OCI-LY7 (cell line): ENCODE measurements at regions of chr3 and their contacts with region 1.

Region 1: DNA sequence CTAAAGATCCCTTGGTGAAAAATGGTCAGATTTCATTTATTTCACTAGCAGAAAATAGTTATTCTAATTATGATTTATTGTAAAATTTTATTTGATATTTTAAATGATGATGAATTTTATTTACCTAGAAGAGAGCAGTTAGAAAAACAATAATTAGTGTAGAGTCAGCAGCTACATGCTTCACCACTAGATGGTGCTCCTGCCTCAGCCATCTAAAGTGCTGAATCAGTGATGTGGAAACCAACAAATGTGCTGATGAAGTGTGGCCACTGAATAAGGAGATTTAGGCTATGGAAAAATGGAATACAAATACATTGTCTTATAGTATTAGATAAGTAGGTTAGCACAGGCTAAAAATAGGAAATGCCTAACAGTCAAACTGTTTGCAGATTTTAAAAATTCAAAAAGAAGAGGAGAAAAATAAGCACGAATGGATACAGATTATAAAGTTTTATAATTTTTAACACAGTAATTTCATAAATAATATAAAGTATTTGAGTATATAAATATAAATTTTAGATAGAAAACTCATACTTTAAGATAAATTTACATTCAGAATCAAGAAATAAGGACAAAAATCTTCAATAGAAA is 109.8 kb downstream of the PPP2R3A start:
- DNase-seq: peak; percentile 76
- H3K4me3 ChIP-seq: no peak overlapping the region
- H3K27ac ChIP-seq: no peak overlapping the region
- H3K4me1 ChIP-seq: no peaks in the 10 kb centered on the region
- CTCF ChIP-seq: peak; percentile 99

Region 2: DNA sequence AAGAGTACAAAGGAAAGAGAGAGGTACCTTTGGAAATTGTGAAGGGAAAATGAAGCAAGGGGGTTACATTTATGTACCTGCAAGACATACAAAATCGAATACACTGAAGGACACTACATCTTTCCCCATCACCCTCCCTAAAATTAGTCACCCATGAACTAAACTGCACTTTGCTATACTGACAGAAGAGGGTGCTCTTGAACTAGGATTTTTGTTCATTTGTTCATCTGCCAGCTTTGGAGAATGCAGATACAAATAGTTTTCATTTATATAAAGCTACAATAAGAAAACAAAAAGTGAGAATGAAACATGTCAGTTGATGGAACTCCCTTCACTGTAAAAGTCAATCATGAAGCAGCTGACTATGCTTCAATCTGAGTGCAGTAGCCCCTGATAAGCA is 230.6 kb after region 1 on chr3:
- CTCF ChIA-PET with region 1: no interaction called
- POLR2A ChIA-PET with region 1: no interaction called
- intact Hi-C with region 1: loop called (anchors 1 kb)
- DNase-seq: peak; percentile 62
- H3K4me3 ChIP-seq: no peak overlapping the region
- H3K27ac ChIP-seq: no peak overlapping the region
- H3K4me1 ChIP-seq: no peaks in the 10 kb centered on the region
- CTCF ChIP-seq: peak; percentile 85

Region 3: GRCh38 chr3:136390574-136390973 is 315.3 kb after region 1 on chr3:
- CTCF ChIA-PET with region 1: no interaction called
- POLR2A ChIA-PET with region 1: no interaction called
- intact Hi-C with region 1: loop called (anchors 5 kb)
- DNase-seq: no peak
- H3K4me3 ChIP-seq: no peak overlapping the region
- H3K27ac ChIP-seq: no peak overlapping the region
- H3K4me1 ChIP-seq: no peaks in the 10 kb centered on the region
- CTCF ChIP-seq: no peak

Region 4: DNA sequence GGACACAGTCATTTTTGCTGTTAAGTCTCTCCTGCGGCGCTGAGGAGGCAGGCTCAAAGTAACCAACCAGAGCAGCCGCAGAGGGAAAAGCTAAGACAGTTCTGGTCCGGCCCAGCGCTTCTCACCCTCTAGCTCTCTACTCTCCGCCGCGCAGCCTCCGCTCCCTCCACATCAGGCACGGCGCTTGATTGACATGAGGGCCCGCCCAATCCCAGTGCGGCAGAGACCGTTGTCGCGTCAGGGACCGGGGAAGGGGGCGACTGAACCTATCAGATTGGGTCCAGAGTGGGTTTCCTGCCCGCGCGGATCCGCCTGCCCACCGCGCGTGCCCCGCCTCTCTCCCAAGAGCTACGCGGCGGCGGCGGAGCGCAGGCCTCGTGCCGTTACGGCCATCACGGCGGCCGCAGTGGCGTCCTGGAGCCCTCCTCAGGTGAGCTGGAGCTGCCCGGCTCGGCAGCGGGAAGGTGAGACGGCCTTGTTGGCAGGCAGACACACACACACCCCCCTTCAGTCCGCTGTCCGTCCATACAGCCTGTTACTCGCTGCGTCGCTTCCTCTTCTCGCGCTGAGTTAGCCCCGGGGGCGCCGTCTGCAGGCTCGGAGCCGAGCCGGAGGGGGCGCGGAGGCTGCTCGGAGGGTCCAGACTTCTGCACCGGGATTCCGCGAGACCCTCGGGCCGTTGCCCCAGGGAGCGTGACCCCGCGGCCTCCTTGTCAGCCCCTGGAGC is 786.7 kb after region 1 on chr3 and contains the start of gene NCK1:
- CTCF ChIA-PET with region 1: no interaction called
- POLR2A ChIA-PET with region 1: no interaction called
- intact Hi-C with region 1: loop called (anchors 10 kb)
- DNase-seq: peak; percentile 98
- H3K4me3 ChIP-seq: peak within 1 kb of the TSS; percentile 84
- H3K27ac ChIP-seq: peak within 1 kb of the TSS; percentile 91
- H3K4me1 ChIP-seq: peaks cover 43% of the 10 kb centered on the region
- CTCF ChIP-seq: peak; percentile 63
- total RNA-seq, gene NCK1: 24.9 and 35.2 TPM in 2 replicates

Region 5: DNA sequence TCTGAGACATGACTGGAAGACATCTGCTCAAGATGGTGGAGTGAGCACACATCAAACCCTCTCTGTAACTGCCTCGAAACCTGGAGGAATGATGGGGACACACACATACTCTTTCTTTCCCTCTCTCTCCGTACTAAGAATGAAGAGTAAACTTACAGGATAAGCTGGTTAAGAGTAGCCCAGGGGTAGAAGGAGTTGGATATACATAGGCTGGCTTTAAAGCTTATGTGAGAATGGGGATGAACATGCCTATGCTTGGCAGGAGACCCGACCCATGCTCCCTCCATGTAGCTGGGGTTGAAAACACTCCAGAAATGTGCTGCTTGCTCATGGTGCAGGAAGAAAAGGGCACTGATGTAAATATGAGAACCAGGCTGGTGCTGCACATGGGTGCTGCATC is 951.4 kb after region 1 on chr3:
- CTCF ChIA-PET with region 1: no interaction called
- POLR2A ChIA-PET with region 1: interaction called, 3 read pairs
- intact Hi-C with region 1: loop called (anchors 5 kb)
- DNase-seq: no peak
- H3K4me3 ChIP-seq: no peak overlapping the region
- H3K27ac ChIP-seq: no peak overlapping the region
- H3K4me1 ChIP-seq: no peaks in the 10 kb centered on the region
- CTCF ChIP-seq: no peak